HepG2 (cell line): ENCODE measurements at regions of chr13 and their contacts with region 1.

Region 1: GRCh38 chr13:100721885-100722512 is 47.4 kb upstream of the TMTC4 start:
- DNase-seq: peak; percentile 50
- ATAC-seq: peak; percentile 87
- H3K4me3 ChIP-seq: no peak overlapping the region
- H3K27ac ChIP-seq: no peak overlapping the region
- H3K4me1 ChIP-seq: peaks cover 20% of the 10 kb centered on the region
- H3K27me3 ChIP-seq: no peaks in the 10 kb centered on the region
- CTCF ChIP-seq: peak; percentile 80
- EP300 ChIP-seq: no peak
- POLR2A ChIP-seq: no peak
- RAD21 ChIP-seq: peak; percentile 70

Region 2: GRCh38 chr13:100274942-100275506 is 447.0 kb before region 1 on chr13:
- CTCF ChIA-PET with region 1: no interaction called
- POLR2A ChIA-PET with region 1: no interaction called
- in situ Hi-C with region 1: no loop called
- intact Hi-C with region 1: no loop called
- DNase-seq: peak; percentile 3
- ATAC-seq: peak; percentile 73
- H3K4me3 ChIP-seq: no peak overlapping the region
- H3K27ac ChIP-seq: no peak overlapping the region
- H3K4me1 ChIP-seq: peaks cover 9% of the 10 kb centered on the region; the same call in 1 of the 2 replicates
- H3K27me3 ChIP-seq: no peaks in the 10 kb centered on the region
- CTCF ChIP-seq: no peak
- EP300 ChIP-seq: no peak
- POLR2A ChIP-seq: no peak
- RAD21 ChIP-seq: no peak

Region 3: GRCh38 chr13:100734194-100734720 is 12.3 kb after region 1 on chr13:
- CTCF ChIA-PET with region 1: no interaction called
- POLR2A ChIA-PET with region 1: interaction called, 4 read pairs
- in situ Hi-C with region 1: no loop called
- intact Hi-C with region 1: loop called (anchors 1 kb)
- DNase-seq: peak; percentile 97
- ATAC-seq: peak; percentile 99
- H3K4me3 ChIP-seq: peak overlapping the region in 1 of 3 experiments; percentile 6; a peak in 1 of 6 replicates
- H3K27ac ChIP-seq: peak overlapping the region; percentile 94
- H3K4me1 ChIP-seq: peaks cover 49% of the 10 kb centered on the region
- H3K27me3 ChIP-seq: no peaks in the 10 kb centered on the region
- CTCF ChIP-seq: peak; percentile 6; the same call in 1 of the 2 replicates
- EP300 ChIP-seq: peak; percentile 62 to 99; a peak in 3 of 4 replicates
- POLR2A ChIP-seq: no peak
- RAD21 ChIP-seq: peak; percentile 22; the same call in 1 of the 2 replicates

Region 4: DNA sequence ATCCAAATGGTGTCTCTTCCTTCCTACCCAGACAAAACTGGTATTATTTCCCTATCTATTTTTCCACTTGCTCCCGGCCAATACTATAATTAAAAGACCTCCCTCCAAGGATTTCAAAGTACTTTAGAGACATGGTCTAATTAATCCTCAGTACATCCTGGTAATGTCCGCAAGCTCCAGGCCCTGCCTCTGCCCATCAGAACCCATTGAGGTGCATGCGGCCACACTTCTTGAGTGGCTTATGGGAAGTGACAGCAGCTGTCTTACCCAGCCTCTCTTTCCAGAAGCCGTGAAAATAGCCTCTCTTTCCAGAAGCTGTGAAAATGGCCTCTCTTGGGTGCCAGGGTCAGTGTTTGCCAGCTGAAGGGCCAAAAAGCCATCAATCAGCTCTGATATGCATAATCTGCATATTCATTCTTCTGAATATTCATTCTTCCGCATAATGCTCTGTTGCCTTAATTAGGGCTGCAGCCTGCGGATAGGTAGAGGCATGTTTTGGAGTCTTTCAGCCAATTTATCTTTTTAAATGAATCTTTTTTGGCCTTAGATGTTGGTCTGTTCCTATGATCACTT is 101.0 kb after region 1 on chr13:
- CTCF ChIA-PET with region 1: interaction called, 7 read pairs
- POLR2A ChIA-PET with region 1: no interaction called
- in situ Hi-C with region 1: loop called (anchors 5 kb)
- intact Hi-C with region 1: loop called (anchors 1 kb)
- DNase-seq: no peak
- ATAC-seq: no peak
- H3K4me3 ChIP-seq: no peak overlapping the region
- H3K27ac ChIP-seq: no peak overlapping the region
- H3K4me1 ChIP-seq: peaks cover 6% of the 10 kb centered on the region
- H3K27me3 ChIP-seq: no peaks in the 10 kb centered on the region
- CTCF ChIP-seq: no peak
- EP300 ChIP-seq: no peak
- POLR2A ChIP-seq: no peak
- RAD21 ChIP-seq: no peak

Region 5: GRCh38 chr13:100883453-100883852 is 161.5 kb after region 1 on chr13:
- CTCF ChIA-PET with region 1: no interaction called
- POLR2A ChIA-PET with region 1: no interaction called
- in situ Hi-C with region 1: no loop called
- intact Hi-C with region 1: loop called (anchors 1 kb)
- DNase-seq: peak; percentile 4
- ATAC-seq: peak; percentile 48; the same call in 2 of the 3 replicates
- H3K4me3 ChIP-seq: no peak overlapping the region
- H3K27ac ChIP-seq: no peak overlapping the region
- H3K4me1 ChIP-seq: no peaks in the 10 kb centered on the region
- H3K27me3 ChIP-seq: no peaks in the 10 kb centered on the region; a peak in 1 of 5 replicates
- CTCF ChIP-seq: peak; percentile 36
- EP300 ChIP-seq: no peak
- POLR2A ChIP-seq: no peak
- RAD21 ChIP-seq: no peak

Region 6: DNA sequence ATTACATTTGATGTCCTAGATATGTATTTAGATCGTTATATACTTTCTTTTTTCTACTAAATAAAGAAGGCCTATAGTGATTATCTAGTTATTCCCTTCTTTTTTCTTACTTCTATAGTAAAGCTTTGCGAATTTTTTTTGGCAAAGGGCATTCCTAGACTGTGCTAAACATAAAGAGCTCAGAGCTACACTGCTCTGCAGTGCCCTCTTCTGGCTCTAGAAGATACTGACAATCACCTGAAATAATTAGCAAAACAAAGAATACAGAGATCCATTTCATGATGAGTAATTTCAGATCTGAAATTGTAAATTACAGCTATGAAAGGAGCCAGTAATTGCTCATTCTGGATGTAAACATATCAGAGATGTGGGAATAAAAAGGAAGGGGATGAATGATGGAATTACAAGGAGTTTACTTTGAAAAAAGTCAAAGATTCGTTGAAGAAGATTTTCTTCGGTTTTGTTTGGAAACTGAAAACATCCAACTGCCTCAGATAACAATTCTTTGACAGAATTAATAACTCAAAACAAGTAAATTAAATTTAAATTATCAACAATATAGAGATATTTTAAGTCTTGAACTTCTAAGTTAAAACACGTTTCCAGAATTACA is 405.8 kb after region 1 on chr13:
- CTCF ChIA-PET with region 1: interaction called, 4 read pairs
- POLR2A ChIA-PET with region 1: no interaction called
- in situ Hi-C with region 1: no loop called
- intact Hi-C with region 1: loop called (anchors 1 kb)
- DNase-seq: peak; percentile 33
- ATAC-seq: peak; percentile 81
- H3K4me3 ChIP-seq: no peak overlapping the region
- H3K27ac ChIP-seq: no peak overlapping the region
- H3K4me1 ChIP-seq: no peaks in the 10 kb centered on the region
- H3K27me3 ChIP-seq: no peaks in the 10 kb centered on the region
- CTCF ChIP-seq: peak; percentile 69
- EP300 ChIP-seq: no peak
- POLR2A ChIP-seq: no peak
- RAD21 ChIP-seq: no peak